ENCODE measurements at regions of chr9 and their contacts with region 1.

Region 1: GRCh38 chr9:100426530-100427428 is at the start of gene MSANTD3:
- DNase-seq: peak; percentile 28 to 79 (median 54)
- ATAC-seq: peak; percentile 80
- H3K4me3 ChIP-seq: peak within 1 kb of the TSS; percentile 78
- H3K4me3 Mint-ChIP-seq: peak within 1 kb of the TSS; percentile 98
- H3K27ac ChIP-seq: peak within 1 kb of the TSS in 1 of 2 donors; percentile 0
- H3K27ac Mint-ChIP-seq: peak within 1 kb of the TSS; percentile 96
- H3K4me1 ChIP-seq: peaks cover 20% of the 10 kb centered on the region
- H3K4me1 Mint-ChIP-seq: peaks cover 44% of the 10 kb centered on the region
- H3K27me3 ChIP-seq: peaks cover 0 to 7% of the 10 kb centered on the region in 2 experiments
- H3K27me3 Mint-ChIP-seq: peaks cover 7% of the 10 kb centered on the region
- CTCF ChIP-seq: no peak
- total RNA-seq, gene MSANTD3: 8.8 to 9.6 TPM

Region 2: GRCh38 chr9:100411472-100412283 is 15.1 kb before region 1 on chr9:
- CTCF ChIA-PET with region 1: interaction called, 3 read pairs
- POLR2A ChIA-PET with region 1: interaction called, 12 read pairs
- intact Hi-C with region 1: loop called (anchors 1 to 2 kb)
- DNase-seq: peak; percentile 66 to 94 (median 82)
- ATAC-seq: peak; percentile 100
- H3K4me3 ChIP-seq: peak overlapping the region; percentile 68
- H3K4me3 Mint-ChIP-seq: peak overlapping the region; percentile 92
- H3K27ac ChIP-seq: no peak overlapping the region
- H3K27ac Mint-ChIP-seq: peak overlapping the region; percentile 40
- H3K4me1 ChIP-seq: peaks cover 13% of the 10 kb centered on the region
- H3K4me1 Mint-ChIP-seq: peaks cover 16% of the 10 kb centered on the region
- H3K27me3 ChIP-seq: peaks cover 0 to 15% of the 10 kb centered on the region in 2 experiments
- H3K27me3 Mint-ChIP-seq: peaks cover 36% of the 10 kb centered on the region
- CTCF ChIP-seq: no peak

Region 3: GRCh38 chr9:100437860-100438805 is 11.4 kb after region 1 on chr9:
- CTCF ChIA-PET with region 1: interaction called, 8 read pairs
- POLR2A ChIA-PET with region 1: no interaction called
- intact Hi-C with region 1: loop called in 1 of 2 experiments (anchors 1 kb)
- DNase-seq: peak; percentile 29 to 81 (median 60)
- ATAC-seq: peak; percentile 55
- H3K4me3 ChIP-seq: no peak overlapping the region
- H3K4me3 Mint-ChIP-seq: no peak overlapping the region
- H3K27ac ChIP-seq: no peak overlapping the region
- H3K27ac Mint-ChIP-seq: no peak overlapping the region
- H3K4me1 ChIP-seq: no peaks in the 10 kb centered on the region
- H3K4me1 Mint-ChIP-seq: no peaks in the 10 kb centered on the region
- H3K27me3 ChIP-seq: no peaks in the 10 kb centered on the region
- H3K27me3 Mint-ChIP-seq: no peaks in the 10 kb centered on the region
- CTCF ChIP-seq: peak; percentile 99

Measured in CD4-positive, alpha-beta T cell (primary cell).